Posterior cingulate gyrus (tissue), 11 donors: ENCODE measurements at regions of chr3 and their contacts with region 1.

Region 1: DNA sequence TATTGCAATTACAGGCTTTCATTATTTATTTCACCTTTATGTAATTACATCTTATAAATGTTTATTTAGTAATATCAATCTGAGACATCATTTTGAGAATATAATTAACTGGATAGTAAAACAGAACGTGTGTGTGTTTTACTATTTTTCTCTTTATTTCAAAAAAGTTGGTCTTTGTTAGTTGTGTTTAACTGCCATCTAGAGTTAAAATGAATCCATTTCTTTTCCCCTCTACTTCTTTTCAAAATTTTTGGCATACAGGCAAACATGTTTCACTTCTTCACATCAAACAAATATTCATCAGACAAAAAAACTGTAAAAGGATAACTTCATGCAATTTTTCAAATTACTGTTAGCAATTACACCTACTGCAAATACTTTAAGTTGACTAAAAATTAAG is 61.1 kb downstream of the FEZF2 start:
- DNase-seq: no peak

Region 2: GRCh38 chr3:62201438-62202035 is 110.7 kb before region 1 on chr3:
- intact Hi-C with region 1: loop called (anchors 5 kb)
- DNase-seq: no peak

Region 3: GRCh38 chr3:62632510-62633214 is 320.5 kb after region 1 on chr3:
- intact Hi-C with region 1: no loop called
- DNase-seq: no peak

Region 4: DNA sequence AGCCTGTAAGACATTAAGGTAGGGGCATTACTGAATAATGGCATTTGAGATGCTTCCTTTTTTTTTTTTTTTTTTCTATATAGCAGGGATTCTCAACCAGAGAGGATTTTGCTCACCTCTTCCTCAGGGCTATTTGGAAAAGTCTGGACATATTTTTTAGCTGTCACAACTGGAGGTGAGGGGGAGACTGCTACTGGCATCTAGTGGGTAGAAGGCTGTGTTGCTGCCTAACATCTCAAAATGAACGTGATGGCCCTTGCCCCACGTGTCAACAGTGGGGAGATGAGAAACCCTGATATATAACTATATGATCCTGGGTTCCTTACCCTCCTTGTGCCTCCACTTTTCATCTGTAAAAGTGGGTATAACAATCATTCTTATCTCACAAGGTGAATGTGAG is 491.1 kb after region 1 on chr3:
- intact Hi-C with region 1: no loop called
- DNase-seq: no peak